Activated CD8-positive, alpha-beta T cell treated with anti-CD3 and anti-CD28 coated beads for 36 hours (primary cell): ENCODE measurements at regions of chr9 and their contacts with region 1.

Region 1: GRCh38 chr9:114505187-114506081 is at the start of gene WHRN:
- DNase-seq: peak; percentile 91
- ATAC-seq: peak; percentile 81
- H3K4me3 Mint-ChIP-seq: peak within 1 kb of the TSS; percentile 77
- H3K27ac Mint-ChIP-seq: peak within 1 kb of the TSS; percentile 43
- H3K4me1 Mint-ChIP-seq: peaks cover 28% of the 10 kb centered on the region
- H3K27me3 Mint-ChIP-seq: peaks cover 24% of the 10 kb centered on the region
- CTCF ChIP-seq: no peak
- total RNA-seq, gene WHRN: 12.6 to 14.9 TPM

Region 2: GRCh38 chr9:114321759-114322158 is 183.7 kb before region 1 on chr9:
- CTCF ChIA-PET with region 1: no interaction called
- POLR2A ChIA-PET with region 1: no interaction called
- intact Hi-C with region 1: no loop called
- DNase-seq: no peak
- ATAC-seq: no peak
- H3K4me3 Mint-ChIP-seq: no peak overlapping the region
- H3K27ac Mint-ChIP-seq: no peak overlapping the region
- H3K4me1 Mint-ChIP-seq: peaks cover 6% of the 10 kb centered on the region
- H3K27me3 Mint-ChIP-seq: peaks cover 5% of the 10 kb centered on the region
- CTCF ChIP-seq: no peak

Region 3: GRCh38 chr9:114351932-114352331 is 153.5 kb before region 1 on chr9:
- CTCF ChIA-PET with region 1: no interaction called
- POLR2A ChIA-PET with region 1: no interaction called
- intact Hi-C with region 1: no loop called
- DNase-seq: no peak
- ATAC-seq: no peak
- H3K4me3 Mint-ChIP-seq: no peak overlapping the region
- H3K27ac Mint-ChIP-seq: peak overlapping the region; percentile 82
- H3K4me1 Mint-ChIP-seq: peaks cover 65% of the 10 kb centered on the region
- H3K27me3 Mint-ChIP-seq: no peaks in the 10 kb centered on the region
- CTCF ChIP-seq: no peak

Region 4: DNA sequence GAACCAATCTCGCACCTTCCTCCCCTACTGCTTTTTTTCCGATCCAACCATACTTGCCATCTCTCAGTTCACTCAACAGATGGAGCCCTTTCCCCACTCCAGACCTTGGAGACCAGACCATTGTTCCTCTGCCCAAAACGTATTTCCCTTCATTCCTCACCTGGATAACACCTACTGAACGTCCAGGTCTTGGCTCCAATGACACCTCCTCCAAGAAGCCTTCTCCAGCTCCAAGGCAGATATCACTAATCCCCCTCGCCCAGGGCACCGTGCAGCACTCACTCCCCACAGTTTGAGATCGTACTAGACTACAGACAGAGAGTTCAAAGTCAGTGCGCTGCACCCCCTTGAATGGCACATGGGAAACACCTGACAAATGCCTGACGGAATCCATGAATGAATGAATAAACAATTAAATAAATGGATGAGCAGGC is 70.5 kb before region 1 on chr9:
- CTCF ChIA-PET with region 1: interaction called, 12 read pairs
- POLR2A ChIA-PET with region 1: interaction called, 3 read pairs
- intact Hi-C with region 1: no loop called
- DNase-seq: no peak
- ATAC-seq: peak; percentile 55
- H3K4me3 Mint-ChIP-seq: no peak overlapping the region
- H3K27ac Mint-ChIP-seq: no peak overlapping the region
- H3K4me1 Mint-ChIP-seq: peaks cover 4% of the 10 kb centered on the region
- H3K27me3 Mint-ChIP-seq: no peaks in the 10 kb centered on the region
- CTCF ChIP-seq: no peak

Region 5: DNA sequence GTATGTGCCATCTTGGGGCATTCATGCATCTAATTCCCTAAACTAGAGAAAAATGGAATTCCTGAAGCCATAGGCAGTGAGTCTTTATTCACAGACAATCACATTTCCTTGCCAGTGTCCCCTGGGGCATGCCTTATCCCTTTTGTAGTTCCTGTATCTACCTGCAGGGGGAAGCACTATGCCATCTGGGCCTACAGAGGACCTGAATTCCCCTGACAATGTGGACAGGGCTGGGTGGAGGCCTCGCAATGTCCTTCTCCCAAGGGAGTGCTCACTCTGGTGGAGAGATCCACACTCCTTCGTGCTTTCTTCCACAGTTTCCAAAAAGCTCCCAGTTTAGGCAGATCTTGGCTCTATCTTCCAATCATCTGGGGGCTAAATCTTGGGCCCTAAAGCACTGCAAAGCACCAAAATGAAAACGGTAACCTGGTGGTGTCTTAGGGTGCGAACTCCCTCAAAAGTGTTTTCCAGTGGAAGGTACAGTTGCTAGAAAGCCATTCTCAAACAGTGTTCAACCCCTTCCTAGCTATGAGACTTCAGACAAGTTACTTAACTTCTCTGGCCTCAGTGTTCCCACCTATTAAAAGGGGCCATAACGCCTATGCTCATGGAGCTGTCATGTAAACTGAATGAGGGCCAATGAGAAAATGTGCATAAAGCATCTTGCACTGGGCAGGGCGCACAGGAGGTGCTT is 17.7 kb before region 1 on chr9:
- CTCF ChIA-PET with region 1: interaction called, 72 read pairs
- POLR2A ChIA-PET with region 1: interaction called, 6 read pairs
- intact Hi-C with region 1: no loop called
- DNase-seq: peak; percentile 73
- ATAC-seq: peak; percentile 78
- H3K4me3 Mint-ChIP-seq: no peak overlapping the region
- H3K27ac Mint-ChIP-seq: peak overlapping the region; percentile 9
- H3K4me1 Mint-ChIP-seq: peaks cover 27% of the 10 kb centered on the region
- H3K27me3 Mint-ChIP-seq: no peaks in the 10 kb centered on the region
- CTCF ChIP-seq: peak; percentile 87

Region 6: DNA sequence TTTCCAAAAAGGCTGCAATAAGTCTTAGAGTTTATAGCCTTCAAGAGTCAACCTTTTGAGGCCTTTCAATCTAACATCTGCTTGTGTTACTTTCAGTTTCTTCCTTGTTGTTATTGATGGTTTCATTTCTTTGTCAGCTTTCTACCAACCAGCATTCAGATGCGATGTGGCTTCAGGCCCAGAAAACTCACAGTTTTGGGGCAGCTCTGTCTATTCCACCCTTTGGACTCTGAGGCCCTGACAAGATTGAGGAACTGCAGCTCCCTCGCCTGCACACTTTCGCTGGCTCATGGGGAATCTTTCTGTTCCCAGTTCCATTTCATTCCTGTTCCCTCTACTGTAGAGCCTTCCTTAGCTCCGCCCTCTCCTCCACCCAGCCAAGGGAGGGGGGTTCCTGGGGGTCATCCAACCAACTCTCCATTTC is 13.2 kb after region 1 on chr9:
- CTCF ChIA-PET with region 1: interaction called, 12 read pairs
- POLR2A ChIA-PET with region 1: interaction called, 4 read pairs
- intact Hi-C with region 1: no loop called
- DNase-seq: no peak
- ATAC-seq: peak; percentile 37
- H3K4me3 Mint-ChIP-seq: no peak overlapping the region
- H3K27ac Mint-ChIP-seq: no peak overlapping the region
- H3K4me1 Mint-ChIP-seq: peaks cover 10% of the 10 kb centered on the region
- H3K27me3 Mint-ChIP-seq: peaks cover 3% of the 10 kb centered on the region
- CTCF ChIP-seq: no peak